ENCODE measurements at regions of chr7 and their contacts with region 1.

Region 1: DNA sequence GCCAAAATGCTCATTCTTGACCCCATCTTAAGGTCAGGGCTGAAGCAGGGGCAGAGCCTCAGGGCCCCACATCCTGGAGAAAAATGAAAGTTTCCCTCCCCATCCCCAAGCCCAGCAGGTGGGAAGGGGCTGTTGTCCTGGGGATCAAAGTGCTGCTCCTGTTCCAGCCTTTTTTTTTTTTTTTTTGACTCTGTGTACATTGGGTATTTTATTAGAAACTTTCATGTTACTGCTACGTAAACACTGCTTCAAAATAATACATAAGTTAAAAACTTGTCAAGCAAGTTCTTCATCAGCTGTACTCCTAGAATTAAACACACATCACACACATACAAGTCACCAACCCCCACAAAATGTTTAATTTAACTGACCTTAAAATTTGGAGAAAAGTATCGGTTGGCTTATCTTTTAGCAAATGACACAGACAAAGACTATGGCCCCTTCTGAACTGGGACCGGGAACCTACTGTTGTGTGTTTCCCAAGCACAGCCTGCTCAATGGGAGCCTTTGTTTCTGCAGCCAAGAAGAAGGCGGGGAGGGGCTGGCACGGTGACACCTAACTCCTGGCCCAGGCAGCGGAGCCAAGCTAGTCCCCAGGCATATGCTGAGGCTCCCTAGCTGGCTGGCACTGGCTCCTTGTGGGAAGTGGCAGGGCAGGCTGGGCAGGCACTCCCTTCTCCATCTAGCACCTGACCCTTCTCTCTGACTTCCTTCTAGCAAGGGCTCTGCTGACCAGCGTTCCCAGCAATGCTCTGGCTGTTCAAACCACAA is 325.2 kb downstream of the PLXNA4 start:
- DNase-seq: peak; percentile 62 to 85
- ATAC-seq: peak; percentile 78 to 94 (median 90)
- H3K4me3 ChIP-seq: no peak overlapping the region
- H3K27ac ChIP-seq: no peak overlapping the region
- H3K4me1 ChIP-seq: peaks cover 17% of the 10 kb centered on the region
- H3K27me3 ChIP-seq: no peaks in the 10 kb centered on the region
- CTCF ChIP-seq: no peak

Region 2: DNA sequence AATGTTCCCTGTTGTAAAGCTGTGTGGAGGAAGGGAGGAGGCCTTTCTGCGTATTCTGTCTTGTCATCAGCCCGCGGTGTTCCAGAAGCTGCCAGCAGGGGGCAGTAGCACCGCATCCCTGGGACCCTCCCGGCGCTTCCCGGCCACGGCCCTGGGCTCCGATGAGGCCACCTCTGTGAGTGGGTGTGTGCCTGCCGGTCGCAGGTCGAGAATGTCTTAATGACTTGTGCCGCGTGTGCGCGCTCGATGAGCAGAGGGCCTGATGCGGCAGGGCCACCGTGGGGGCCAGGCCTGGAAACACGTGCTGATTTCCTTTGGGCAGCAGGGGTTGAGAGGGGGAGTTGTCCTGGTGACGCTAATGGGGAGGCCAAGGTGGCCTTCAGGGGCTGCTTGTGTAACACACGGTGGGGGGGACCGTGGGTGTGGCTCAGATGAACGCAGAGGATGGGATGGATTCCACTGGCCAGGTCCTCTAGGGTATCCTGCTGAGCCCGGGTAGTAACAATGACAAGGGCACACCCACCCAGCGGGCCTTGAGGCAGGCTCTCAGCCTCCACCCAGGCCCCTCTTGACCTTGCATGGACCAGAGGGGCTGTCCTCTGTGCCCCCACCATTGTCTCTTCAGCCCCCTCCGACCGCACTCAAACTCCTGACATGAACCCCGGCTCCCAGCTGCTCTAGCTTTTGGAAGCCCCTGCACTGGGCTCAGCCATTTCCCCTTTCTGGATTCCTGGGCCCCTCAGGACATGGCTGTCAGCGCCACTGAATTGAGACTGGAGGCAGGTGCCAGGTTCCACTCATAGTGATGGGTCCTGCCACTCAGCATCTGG is 558.7 kb before region 1 on chr7:
- intact Hi-C with region 1: loop called (anchors 2 to 10 kb)
- DNase-seq: peak; percentile 39 to 60
- ATAC-seq: peak in 3 of 4 donors; percentile 65 to 70 (median 65)
- H3K4me3 ChIP-seq: no peak overlapping the region
- H3K27ac ChIP-seq: no peak overlapping the region
- H3K4me1 ChIP-seq: no peaks in the 10 kb centered on the region
- H3K27me3 ChIP-seq: peaks cover 0 to 30% (median 3%) of the 10 kb centered on the region in 3 donors
- CTCF ChIP-seq: peak; percentile 65

Region 3: DNA sequence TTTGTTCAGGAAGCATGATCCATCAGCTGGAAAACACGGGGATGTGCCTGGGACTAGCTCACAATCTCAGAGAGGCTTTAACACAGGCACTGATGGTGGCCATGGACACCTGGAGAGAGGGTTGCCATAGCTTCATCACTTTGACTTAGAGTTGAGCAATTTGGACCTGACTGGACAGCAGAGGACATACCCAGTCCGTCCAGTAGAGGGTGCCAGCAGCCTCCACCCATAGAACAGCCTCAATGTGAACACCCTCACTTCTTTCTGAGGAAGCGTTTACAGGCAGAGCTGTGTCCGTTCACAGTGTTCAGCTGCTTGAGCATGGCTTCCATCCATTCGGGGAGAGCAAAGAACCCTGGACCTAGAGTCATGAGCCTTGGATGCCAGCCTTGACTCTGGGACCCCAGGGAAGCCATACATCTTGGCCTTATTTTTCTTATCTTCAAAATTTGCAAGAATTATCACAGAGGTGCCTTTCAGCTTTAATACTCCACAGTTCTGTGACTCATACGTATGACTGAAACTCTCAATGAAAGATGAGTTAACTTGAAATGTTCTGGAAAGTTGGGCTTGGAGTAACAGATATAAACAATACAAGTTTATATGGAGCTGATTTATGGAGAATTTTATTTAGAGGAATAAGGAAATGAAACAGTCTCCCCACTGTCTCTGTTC is 391.8 kb before region 1 on chr7:
- intact Hi-C with region 1: loop called in 1 of 2 experiments (anchors 2 kb)
- DNase-seq: peak; percentile 50 to 65
- ATAC-seq: peak; percentile 70 to 82 (median 79)
- H3K4me3 ChIP-seq: no peak overlapping the region
- H3K27ac ChIP-seq: no peak overlapping the region
- H3K4me1 ChIP-seq: no peaks in the 10 kb centered on the region
- H3K27me3 ChIP-seq: no peaks in the 10 kb centered on the region
- CTCF ChIP-seq: peak; percentile 70

Region 4: DNA sequence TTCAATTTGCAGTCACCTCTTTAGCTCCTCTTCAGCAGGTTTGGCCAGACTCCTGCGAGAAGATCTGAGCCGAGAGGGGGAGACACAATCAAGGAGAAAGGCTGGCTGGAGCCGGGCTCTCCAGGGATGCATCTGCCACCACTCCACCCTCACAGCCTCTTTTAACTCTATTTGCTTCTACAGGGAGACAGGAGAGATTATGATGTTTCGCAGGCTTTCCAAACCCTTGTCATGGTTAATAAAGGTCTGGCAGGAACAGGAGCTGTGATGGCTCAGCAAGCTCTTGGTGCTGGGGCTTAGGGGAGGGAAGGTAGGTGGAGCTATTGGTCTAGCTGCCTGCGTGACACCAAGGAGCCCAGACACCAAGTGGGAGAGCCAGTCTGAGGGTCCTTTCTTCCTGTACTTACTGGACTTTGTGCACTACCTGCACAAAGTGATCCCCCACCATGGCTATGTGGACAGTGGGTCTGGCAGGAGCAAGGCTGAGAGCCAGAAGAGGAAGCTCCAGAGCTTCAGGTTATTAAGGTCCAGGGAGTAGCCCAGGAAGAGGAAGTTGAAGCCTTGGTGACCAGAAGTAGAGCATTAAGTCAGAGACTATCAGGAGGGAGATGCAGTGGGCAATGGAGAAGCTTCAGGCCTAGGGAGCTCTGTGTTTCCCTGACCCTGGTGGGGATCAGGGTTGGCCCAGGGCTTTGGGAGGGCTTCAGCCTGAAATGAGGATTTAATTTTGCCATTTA is 246.4 kb before region 1 on chr7:
- intact Hi-C with region 1: loop called (anchors 5 kb)
- DNase-seq: peak in 1 of 2 donors; percentile 18
- ATAC-seq: peak; percentile 44 to 92 (median 88)
- H3K4me3 ChIP-seq: no peak overlapping the region
- H3K27ac ChIP-seq: no peak overlapping the region
- H3K4me1 ChIP-seq: no peaks in the 10 kb centered on the region
- H3K27me3 ChIP-seq: no peaks in the 10 kb centered on the region
- CTCF ChIP-seq: peak; percentile 41